ENCODE measurements at regions of chr10 and their contacts with region 1.

Region 1: DNA sequence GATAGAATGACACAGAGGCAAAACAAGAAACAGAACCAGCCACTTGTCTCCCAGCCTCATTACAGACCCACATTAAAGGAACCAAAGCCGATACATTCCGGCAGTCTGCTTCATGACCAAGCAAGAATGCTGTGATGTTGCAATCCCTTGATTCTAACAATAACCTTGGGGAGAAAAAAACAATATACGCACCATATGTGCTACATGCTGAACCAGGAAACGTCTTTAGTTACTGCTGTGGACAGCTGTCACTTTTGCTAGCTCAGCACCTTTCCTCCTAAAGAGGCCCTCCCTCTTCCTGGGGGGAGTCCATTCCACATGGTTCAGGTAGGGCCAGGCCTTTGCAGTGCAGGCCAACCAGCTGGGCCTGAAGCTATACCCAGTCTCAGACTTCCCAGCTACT is 79.1 kb downstream of the PRTFDC1 start:
- DNase-seq: no peak
- ATAC-seq: no peak
- H3K4me3 ChIP-seq: no peak overlapping the region
- H3K27ac ChIP-seq: no peak overlapping the region
- H3K4me1 ChIP-seq: no peaks in the 10 kb centered on the region
- H3K27me3 ChIP-seq: no peaks in the 10 kb centered on the region
- CTCF ChIP-seq: no peak
- EP300 ChIP-seq: no peak
- POLR2A ChIP-seq: no peak
- RAD21 ChIP-seq: no peak

Region 2: DNA sequence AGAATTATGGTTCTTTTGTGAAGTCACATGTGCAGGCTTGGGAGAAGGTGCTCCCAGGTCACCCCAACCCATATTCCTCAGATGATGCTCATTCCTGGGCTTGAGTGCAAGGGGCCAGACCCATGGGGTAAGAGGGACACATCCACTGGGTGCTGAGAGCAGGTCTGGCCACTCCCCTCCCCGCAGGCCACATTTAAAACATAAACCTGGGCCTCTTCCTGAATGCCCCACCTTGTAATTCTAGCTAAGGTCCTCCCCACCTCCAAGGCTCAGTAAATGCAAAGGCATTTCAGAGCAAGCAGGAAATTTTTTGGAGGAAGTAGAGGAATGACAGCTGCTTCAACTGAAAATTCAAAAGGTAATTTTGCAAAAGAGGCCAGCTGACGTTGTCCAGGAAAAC is 322.1 kb before region 1 on chr10:
- CTCF ChIA-PET with region 1: no interaction called
- POLR2A ChIA-PET with region 1: no interaction called
- RAD21 ChIA-PET with region 1: no interaction called
- SMC1A ChIA-PET with region 1: no interaction called
- in situ Hi-C with region 1: no loop called
- intact Hi-C with region 1: no loop called
- DNase-seq: no peak
- ATAC-seq: no peak
- H3K4me3 ChIP-seq: no peak overlapping the region
- H3K27ac ChIP-seq: no peak overlapping the region
- H3K4me1 ChIP-seq: no peaks in the 10 kb centered on the region
- H3K27me3 ChIP-seq: no peaks in the 10 kb centered on the region
- CTCF ChIP-seq: no peak
- EP300 ChIP-seq: no peak
- POLR2A ChIP-seq: no peak
- RAD21 ChIP-seq: no peak

Region 3: DNA sequence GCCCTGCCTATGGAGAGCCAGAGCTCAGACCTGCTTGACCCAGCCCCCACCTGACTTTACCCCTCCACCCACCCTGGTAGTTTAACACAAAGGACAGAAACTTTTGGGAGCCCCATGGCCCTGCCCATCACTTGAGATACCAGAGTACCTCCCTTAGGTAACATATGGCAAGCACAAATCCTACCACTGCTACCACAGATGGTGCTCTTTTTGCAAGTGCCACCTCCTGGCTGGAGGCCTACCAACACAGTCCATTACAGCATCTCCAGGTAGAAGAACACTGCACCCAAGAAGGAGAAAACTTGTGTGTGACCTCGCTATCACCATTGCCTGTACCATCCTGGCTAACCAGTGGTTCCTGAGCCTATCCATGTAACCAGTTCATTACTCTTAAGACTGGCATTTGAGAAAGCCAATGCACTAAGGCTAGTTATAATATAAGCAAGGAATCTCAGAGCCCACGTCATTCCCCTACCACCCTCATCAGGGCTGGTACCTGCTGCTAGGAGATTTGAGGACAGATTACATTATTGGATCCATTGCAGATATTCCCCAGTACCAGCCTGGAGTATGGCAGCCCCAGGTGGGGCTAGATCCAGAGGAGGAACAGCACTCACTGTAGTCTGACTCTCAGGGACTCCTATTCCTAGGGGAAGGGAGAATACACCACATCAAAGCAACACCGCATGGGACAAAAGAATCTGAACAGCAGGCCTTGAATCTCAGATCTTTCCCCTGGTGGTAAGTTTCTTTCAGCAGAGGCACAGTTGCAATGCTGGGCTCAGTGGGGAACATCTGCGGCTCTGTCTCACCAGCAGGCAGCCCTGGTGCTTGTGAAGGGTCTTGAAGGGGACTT is 38.7 kb before region 1 on chr10:
- CTCF ChIA-PET with region 1: no interaction called
- POLR2A ChIA-PET with region 1: no interaction called
- RAD21 ChIA-PET with region 1: no interaction called
- SMC1A ChIA-PET with region 1: no interaction called
- in situ Hi-C with region 1: no loop called
- intact Hi-C with region 1: loop called (anchors 5 kb)
- DNase-seq: no peak
- ATAC-seq: no peak
- H3K4me3 ChIP-seq: no peak overlapping the region
- H3K27ac ChIP-seq: no peak overlapping the region
- H3K4me1 ChIP-seq: no peaks in the 10 kb centered on the region
- H3K27me3 ChIP-seq: no peaks in the 10 kb centered on the region
- CTCF ChIP-seq: no peak
- EP300 ChIP-seq: no peak
- POLR2A ChIP-seq: no peak
- RAD21 ChIP-seq: no peak

Measured in GM12878 (cell line).